Mammary epithelial cell (primary cell): ENCODE measurements at regions of chr3 and their contacts with region 1.

Region 1: DNA sequence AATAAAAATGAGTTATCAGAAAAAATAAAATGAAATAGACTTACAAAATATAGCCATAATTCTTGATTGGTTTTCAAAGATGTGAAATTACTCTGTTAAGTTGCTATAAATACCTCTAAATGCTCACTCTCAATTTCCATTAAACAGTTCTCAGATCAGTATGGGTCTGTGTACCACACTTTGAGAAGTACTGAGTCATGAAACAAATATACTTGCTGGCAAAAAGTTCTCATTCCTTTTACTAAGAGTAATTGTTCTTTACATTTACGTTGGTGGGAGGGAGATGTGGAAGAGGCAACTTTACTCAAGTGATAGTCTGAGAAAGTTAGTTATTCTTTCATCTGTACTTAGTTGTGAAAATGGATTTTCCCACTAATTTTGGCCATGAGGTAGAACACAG is 96.3 kb downstream of the ZNF385D start:
- DNase-seq: peak; percentile 35
- H3K4me3 ChIP-seq: no peak overlapping the region
- H3K27ac ChIP-seq: no peak overlapping the region
- H3K4me1 ChIP-seq: peaks cover 7% of the 10 kb centered on the region
- H3K27me3 ChIP-seq: no peaks in the 10 kb centered on the region
- CTCF ChIP-seq: no peak

Region 2: DNA sequence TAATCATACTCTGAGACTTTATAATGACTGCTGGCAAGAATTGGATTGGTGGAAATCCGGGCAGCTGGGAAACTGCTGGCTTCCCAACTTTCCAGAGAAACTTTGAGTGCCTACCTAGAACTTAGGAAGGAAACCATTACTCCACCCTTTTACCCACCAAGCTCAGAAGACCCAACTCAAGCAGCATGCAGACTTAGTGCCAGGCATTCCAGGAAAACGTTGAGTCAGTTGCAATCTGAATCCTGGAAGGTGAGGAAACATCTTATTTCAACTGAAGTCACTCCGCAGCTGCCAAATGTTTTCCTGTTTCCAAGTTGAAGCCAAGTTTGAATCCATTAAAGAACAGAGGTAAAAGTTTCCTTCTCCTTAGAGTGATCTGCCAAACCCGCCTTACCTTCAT is 30.1 kb before region 1 on chr3:
- CTCF ChIA-PET with region 1: no interaction called
- dilution Hi-C with region 1: no loop called
- in situ Hi-C with region 1: no loop called
- intact Hi-C with region 1: no loop called
- DNase-seq: no peak
- H3K4me3 ChIP-seq: no peak overlapping the region
- H3K27ac ChIP-seq: no peak overlapping the region
- H3K4me1 ChIP-seq: no peaks in the 10 kb centered on the region
- H3K27me3 ChIP-seq: no peaks in the 10 kb centered on the region
- CTCF ChIP-seq: no peak

Region 3: DNA sequence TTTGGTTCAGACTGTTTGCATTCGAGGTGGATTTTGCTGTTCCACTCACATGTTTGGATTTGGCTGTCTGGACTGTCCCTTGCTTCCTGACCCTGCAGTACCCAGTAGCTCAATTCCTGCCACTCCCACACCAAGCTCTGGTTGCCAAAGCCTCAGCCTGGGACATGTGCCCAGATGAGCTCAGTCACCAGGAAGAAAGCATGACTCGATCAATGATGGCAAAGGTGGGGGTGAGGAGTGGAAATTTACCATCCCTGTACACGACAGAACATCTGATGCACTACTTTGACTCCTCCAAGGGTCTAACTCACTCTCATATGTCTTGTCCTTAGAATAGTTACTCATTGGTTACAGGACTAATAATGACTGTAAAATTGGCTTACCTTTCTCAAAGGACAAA is 51.1 kb after region 1 on chr3:
- CTCF ChIA-PET with region 1: interaction called, 12 read pairs
- dilution Hi-C with region 1: no loop called
- in situ Hi-C with region 1: no loop called
- intact Hi-C with region 1: no loop called
- DNase-seq: peak; percentile 90
- H3K4me3 ChIP-seq: no peak overlapping the region
- H3K27ac ChIP-seq: peak overlapping the region; percentile 52
- H3K4me1 ChIP-seq: peaks cover 17% of the 10 kb centered on the region
- H3K27me3 ChIP-seq: no peaks in the 10 kb centered on the region
- CTCF ChIP-seq: no peak